B cell (primary cell): ENCODE measurements at regions of chr11 and their contacts with region 1.

Region 1: GRCh38 chr11:35313066-35313759 is 106.1 kb downstream of the SLC1A2 start:
- DNase-seq: peak; percentile 84
- ATAC-seq: peak; percentile 91
- H3K4me3 ChIP-seq: peak overlapping the region in 2 of 5 experiments; percentile 20 to 42
- H3K4me3 Mint-ChIP-seq: peak overlapping the region; percentile 63
- H3K27ac ChIP-seq: peak overlapping the region; percentile 92 to 93
- H3K27ac Mint-ChIP-seq: peak overlapping the region; percentile 86
- H3K4me1 ChIP-seq: peaks cover 43 to 61% of the 10 kb centered on the region in 2 donors
- H3K4me1 Mint-ChIP-seq: peaks cover 56% of the 10 kb centered on the region
- H3K27me3 ChIP-seq: no peaks in the 10 kb centered on the region
- H3K27me3 Mint-ChIP-seq: no peaks in the 10 kb centered on the region
- CTCF ChIP-seq: no peak

Region 2: DNA sequence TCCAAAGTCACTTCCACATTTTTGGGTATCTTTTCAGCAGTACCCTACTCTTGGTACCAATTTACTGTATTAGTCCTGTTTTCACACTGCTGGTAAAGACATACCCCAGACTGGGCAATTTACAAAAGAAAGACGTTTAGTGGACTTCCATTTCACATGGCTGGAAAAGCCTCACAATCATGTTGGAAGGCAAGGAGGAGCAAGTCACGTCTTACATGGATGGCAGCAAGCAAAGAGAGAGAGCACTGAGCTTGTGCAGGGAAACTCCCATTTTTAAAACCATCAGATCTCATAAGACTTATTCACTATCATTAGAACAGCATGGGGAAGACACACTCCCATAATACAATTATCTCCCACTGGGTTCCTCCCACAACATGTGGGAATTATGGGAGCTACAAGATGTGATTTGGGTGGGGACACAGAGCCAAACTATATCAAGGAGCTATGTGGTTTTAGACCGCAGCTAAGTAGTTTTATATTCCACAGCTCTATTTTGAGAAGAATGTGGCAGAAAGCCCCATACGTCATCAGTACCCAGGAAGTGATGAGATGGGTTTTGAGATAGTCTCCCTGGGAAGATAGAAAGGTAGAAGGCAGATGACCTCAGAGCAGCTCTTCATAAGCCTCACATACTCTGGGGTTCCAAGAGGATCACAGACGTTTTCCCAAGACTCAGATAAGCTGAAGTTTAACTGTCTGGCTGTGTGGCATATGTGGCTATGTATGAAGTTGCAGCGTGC is 493.3 kb before region 1 on chr11:
- CTCF ChIA-PET with region 1: no interaction called
- POLR2A ChIA-PET with region 1: no interaction called
- intact Hi-C with region 1: no loop called
- DNase-seq: no peak
- ATAC-seq: no peak
- H3K4me3 ChIP-seq: no peak overlapping the region
- H3K4me3 Mint-ChIP-seq: no peak overlapping the region
- H3K27ac ChIP-seq: no peak overlapping the region
- H3K27ac Mint-ChIP-seq: no peak overlapping the region
- H3K4me1 ChIP-seq: no peaks in the 10 kb centered on the region
- H3K4me1 Mint-ChIP-seq: no peaks in the 10 kb centered on the region
- H3K27me3 ChIP-seq: peaks cover 0 to 8% (median 0%) of the 10 kb centered on the region in 4 experiments
- H3K27me3 Mint-ChIP-seq: peaks cover 18% of the 10 kb centered on the region
- CTCF ChIP-seq: no peak

Region 3: DNA sequence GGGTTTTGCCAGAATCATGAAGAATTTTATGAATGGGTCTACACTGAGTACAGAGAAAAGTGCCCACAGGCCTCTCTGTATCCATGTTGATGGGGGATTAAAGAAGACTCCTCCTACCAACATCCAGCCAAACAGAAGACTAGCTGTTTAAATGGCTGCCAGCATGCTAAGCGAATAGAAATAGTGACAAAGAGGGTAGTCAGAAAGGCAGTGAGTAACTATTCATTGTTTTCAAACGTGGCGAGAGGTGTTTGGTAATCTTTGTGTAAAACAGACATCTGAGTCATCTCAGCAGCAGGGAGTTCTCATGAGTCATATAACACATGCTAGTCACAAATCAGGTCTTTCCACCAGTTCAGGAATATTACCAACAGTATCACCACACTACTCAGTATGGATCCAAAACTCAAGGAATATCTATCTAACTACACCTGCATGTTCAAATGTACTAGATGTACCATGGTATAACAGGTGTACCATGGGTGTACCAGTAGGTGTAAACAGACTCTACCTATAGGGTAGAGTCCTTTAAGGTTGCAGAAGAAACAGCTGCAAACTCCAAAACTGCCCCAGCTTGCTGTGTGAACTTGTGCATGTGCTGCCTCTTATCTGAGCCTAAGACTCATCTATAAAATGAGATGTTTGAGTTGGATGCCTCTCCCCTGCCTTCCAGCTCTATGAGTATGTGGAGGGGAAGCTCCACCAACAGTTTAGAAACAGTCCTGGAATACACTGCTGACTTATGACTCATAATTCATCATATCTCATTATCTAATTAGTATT is 24.1 kb after region 1 on chr11:
- CTCF ChIA-PET with region 1: interaction called, 3 read pairs
- POLR2A ChIA-PET with region 1: interaction called, 4 read pairs
- intact Hi-C with region 1: loop called (anchors 1 kb)
- DNase-seq: no peak
- ATAC-seq: no peak
- H3K4me3 ChIP-seq: no peak overlapping the region
- H3K4me3 Mint-ChIP-seq: no peak overlapping the region
- H3K27ac ChIP-seq: no peak overlapping the region
- H3K27ac Mint-ChIP-seq: no peak overlapping the region
- H3K4me1 ChIP-seq: peaks cover 14 to 26% of the 10 kb centered on the region in 2 donors
- H3K4me1 Mint-ChIP-seq: peaks cover 22% of the 10 kb centered on the region
- H3K27me3 ChIP-seq: no peaks in the 10 kb centered on the region
- H3K27me3 Mint-ChIP-seq: no peaks in the 10 kb centered on the region
- CTCF ChIP-seq: no peak

Region 4: DNA sequence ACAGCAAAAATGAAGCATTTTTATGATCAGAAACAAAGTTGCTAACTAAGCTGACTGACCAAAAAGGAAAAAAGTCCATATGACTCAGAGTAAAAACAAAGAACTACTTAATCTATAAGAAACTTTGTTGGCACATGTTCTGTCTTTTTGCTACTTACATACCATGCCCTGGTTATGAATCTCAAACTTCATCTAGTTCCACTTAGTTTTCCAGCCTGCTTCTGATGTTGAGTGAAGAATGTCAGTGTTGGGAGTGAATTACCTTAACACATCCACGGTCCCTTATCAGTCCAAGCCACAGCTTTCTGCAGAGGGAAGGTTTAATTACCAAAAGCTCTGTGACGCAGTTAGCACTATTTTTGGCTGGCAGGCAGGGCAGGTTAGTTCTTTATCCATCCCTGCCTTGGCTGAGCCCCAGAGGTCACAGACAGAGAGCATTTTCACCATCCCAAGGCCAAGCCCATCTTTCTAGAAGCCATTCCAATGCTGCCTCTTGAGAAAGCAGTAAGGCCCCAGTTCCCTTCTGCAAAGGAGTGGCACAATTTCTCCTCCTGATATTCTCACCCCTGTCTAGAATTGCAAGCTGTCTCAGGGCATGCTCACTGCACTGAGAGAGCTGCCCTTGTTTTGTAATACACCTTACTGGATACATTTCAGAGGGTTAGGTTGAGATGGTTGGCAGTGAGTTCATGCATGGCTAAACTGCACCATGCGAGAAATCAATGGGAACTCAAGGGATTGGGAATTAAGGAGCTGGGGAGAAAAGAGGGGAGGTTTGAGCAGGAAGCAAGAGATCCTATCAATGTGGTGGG is 39.1 kb after region 1 on chr11:
- CTCF ChIA-PET with region 1: no interaction called
- POLR2A ChIA-PET with region 1: no interaction called
- intact Hi-C with region 1: loop called (anchors 5 kb)
- DNase-seq: no peak
- ATAC-seq: no peak
- H3K4me3 ChIP-seq: no peak overlapping the region
- H3K4me3 Mint-ChIP-seq: no peak overlapping the region
- H3K27ac ChIP-seq: no peak overlapping the region
- H3K27ac Mint-ChIP-seq: no peak overlapping the region
- H3K4me1 ChIP-seq: peaks cover 0 to 4% of the 10 kb centered on the region in 2 donors
- H3K4me1 Mint-ChIP-seq: peaks cover 16% of the 10 kb centered on the region
- H3K27me3 ChIP-seq: no peaks in the 10 kb centered on the region
- H3K27me3 Mint-ChIP-seq: no peaks in the 10 kb centered on the region
- CTCF ChIP-seq: no peak